Right cardiac atrium (tissue), 5 donors: ENCODE measurements at regions of chr2 and their contacts with region 1.

Region 1: DNA sequence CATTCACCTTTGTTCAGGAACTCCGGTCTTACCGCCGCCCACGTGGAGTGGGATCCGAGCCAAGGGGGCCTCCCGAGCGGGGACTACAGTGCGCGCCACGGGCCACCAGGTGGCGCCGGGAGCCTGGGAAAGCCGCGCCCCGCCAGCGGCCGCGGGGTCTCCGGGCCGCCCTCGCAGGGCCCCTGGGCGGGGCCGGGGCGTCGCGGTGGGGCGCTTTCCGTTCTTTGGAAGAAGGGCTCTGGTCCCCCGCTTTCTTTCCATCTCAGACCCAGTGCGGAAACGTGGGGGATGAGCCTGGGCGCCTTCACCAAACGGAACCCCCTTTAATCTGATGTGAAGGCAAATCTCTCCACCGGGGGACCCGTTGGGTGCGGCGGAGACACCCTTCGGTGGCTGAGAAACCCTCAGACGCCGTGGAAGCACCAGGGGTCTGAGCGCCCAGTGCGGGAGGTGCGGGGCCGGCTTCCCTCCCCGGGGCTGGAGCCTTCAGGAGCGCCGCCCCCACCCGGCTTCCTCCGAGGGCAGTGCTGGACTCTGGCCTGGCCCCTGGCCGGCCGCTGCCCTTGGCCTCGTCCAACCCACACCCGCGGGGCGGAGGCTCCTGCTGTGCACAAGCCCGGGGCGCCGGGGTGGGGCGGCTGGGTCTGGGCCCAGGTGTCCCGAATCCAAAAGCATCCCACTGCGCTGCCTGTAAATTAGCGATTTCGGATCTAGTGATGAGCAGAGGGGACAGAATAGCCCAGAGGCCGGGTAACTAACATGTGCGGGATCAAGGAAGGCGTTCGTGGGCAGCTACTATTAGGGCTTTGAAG is 44.6 kb downstream of the GORASP2 start:
- DNase-seq: peak; percentile 86 to 95 (median 94)
- ATAC-seq: peak; percentile 95 to 96
- H3K4me3 ChIP-seq: peak overlapping the region; percentile 77
- H3K27ac ChIP-seq: peak overlapping the region; percentile 39
- H3K4me1 ChIP-seq: no peaks in the 10 kb centered on the region
- H3K27me3 ChIP-seq: no peaks in the 10 kb centered on the region

Region 2: GRCh38 chr2:169513926-169514325 is 1459.8 kb before region 1 on chr2:
- intact Hi-C with region 1: no loop called
- DNase-seq: no peak
- ATAC-seq: peak; percentile 53 to 67
- H3K4me3 ChIP-seq: no peak overlapping the region
- H3K27ac ChIP-seq: no peak overlapping the region
- H3K4me1 ChIP-seq: no peaks in the 10 kb centered on the region
- H3K27me3 ChIP-seq: no peaks in the 10 kb centered on the region

Region 3: DNA sequence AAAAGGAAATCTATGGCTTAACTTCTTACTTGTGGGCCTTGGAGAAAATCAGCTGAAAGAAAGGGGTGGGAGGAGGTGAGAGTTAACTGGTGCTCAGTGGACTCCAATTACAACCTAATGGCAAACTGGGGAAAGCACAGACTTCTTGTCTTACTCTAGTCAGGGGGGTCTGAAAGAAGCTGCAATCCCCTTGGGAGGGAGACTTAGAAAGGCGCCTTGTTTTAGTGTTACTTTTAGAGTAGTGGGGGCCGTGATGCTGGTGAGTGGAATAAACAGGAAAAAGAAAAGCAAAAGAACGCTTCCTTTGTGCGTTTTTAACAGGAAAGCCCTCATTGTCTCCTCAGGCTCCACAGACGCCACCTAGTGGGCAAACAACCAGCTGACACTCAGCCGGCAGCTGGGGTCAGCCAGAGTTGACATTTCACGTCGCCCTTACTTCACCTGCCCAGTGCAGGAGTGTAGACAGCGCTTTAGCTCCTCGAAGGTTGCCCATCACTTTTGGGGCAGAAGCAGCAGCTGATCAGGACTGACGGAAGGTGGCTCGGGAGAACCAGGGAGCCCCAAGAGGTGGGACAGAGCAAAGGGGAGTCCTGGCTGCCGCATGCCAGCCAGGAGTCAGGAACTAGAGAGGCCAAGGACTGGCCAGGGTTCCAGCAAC is 100.5 kb before region 1 on chr2:
- intact Hi-C with region 1: no loop called
- DNase-seq: peak; percentile 68 to 85 (median 81)
- ATAC-seq: peak; percentile 86 to 88
- H3K4me3 ChIP-seq: peak overlapping the region; percentile 24
- H3K27ac ChIP-seq: no peak overlapping the region
- H3K4me1 ChIP-seq: no peaks in the 10 kb centered on the region
- H3K27me3 ChIP-seq: no peaks in the 10 kb centered on the region

Region 4: GRCh38 chr2:171160119-171160955 is 186.6 kb after region 1 on chr2 and contains the start of gene TLK1:
- intact Hi-C with region 1: loop called in 1 of 4 experiments (anchors 5 kb)
- DNase-seq: peak; percentile 72 to 89 (median 86)
- ATAC-seq: peak; percentile 81 to 86
- H3K4me3 ChIP-seq: peak within 1 kb of the TSS; percentile 90
- H3K27ac ChIP-seq: peak within 1 kb of the TSS; percentile 95
- H3K4me1 ChIP-seq: no peaks in the 10 kb centered on the region
- H3K27me3 ChIP-seq: no peaks in the 10 kb centered on the region
- total RNA-seq, gene TLK1: 32.6 to 35.3 (median 33.2) TPM

Region 5: DNA sequence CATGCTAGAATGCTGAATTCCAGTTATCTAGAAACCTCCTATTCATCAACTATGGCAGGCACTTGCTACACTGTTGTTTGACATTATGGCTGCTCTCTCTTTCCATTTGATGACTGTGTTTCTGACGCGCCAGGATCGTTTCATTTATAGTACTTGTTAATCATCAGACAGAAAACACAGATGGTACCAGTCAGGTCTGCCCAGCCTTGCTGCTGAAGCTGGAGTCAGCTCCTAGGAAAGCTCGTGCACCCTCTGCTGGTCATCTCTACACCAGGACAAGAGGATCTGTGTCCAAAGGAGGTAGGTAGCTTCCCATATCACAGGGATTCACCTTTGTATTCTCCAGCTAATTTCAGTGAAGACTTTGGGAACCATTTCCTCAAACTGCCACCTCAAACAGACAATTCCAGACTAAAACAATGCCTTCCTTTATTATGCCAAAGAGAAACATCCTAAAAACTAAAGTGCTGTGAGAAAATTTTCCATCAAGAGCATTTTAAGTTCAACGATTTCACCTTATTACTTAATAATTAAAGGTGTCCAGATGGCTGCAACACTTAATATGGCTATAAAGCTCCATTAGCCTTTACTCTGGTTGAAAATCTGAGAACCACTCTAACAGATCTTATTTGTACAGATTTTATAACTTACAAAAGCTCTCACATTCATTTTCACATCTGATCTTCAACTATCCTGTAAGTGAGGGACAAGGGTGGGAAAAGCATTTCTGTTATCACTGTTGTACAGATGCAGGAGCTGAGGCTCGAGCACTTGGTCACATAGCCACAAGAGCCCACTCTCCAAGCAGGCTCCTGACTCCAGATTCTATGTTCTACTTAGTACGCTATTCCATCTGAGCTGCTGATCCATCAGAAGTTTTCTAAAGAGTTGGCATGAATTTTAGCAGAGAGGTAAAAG is 442.6 kb after region 1 on chr2:
- intact Hi-C with region 1: loop called (anchors 2 to 5 kb)
- DNase-seq: peak; percentile 88 to 93 (median 89)
- ATAC-seq: peak; percentile 97 to 99
- H3K4me3 ChIP-seq: no peak overlapping the region
- H3K27ac ChIP-seq: no peak overlapping the region
- H3K4me1 ChIP-seq: no peaks in the 10 kb centered on the region
- H3K27me3 ChIP-seq: no peaks in the 10 kb centered on the region